Cardiac septum (tissue), 1 donor: ENCODE measurements at regions of chr7 and their contacts with region 1.

Region 1: DNA sequence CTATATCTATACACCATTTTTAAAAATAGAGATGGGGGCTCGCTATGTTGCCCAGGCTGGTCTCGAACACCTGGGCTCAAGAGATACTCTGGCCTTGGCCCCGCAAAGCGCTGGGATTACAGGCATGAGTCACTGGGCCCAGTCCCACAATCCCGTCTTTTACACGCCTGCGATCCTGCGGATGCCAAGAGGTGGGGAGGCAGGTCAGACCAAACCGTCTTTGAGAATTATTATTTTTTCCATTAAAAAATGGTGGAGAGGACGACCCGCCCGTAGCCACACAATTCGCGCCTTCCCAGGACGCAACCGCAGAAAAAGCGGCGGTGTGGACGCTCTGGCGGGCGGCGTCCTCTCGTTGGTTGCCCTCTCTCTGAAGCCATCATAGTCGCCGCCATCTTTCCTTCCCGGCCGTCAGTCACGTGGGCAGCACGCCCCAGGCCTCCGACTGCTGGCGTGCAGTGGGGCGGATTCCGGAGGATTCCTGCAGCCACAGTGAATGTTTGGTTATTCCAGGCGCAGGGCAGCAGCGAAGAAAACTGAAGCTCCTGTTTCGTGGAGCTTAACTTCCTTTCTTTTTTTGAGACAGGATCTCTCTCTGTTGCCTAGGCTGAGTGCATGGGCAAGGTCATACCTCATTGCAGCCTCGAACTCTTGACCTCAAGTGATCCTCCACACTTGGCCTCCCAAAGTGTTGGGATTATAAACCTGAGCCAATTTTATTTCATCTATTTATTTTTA is 9.9 kb upstream of the EPHB4 start:
- DNase-seq: peak; percentile 96

Region 2: GRCh38 chr7:100719523-100720319 is 117.5 kb before region 1 on chr7:
- intact Hi-C with region 1: no loop called
- DNase-seq: no peak

Region 3: GRCh38 chr7:100803398-100804233 is 33.7 kb before region 1 on chr7:
- intact Hi-C with region 1: loop called (anchors 5 kb)
- DNase-seq: peak; percentile 79

Region 4: DNA sequence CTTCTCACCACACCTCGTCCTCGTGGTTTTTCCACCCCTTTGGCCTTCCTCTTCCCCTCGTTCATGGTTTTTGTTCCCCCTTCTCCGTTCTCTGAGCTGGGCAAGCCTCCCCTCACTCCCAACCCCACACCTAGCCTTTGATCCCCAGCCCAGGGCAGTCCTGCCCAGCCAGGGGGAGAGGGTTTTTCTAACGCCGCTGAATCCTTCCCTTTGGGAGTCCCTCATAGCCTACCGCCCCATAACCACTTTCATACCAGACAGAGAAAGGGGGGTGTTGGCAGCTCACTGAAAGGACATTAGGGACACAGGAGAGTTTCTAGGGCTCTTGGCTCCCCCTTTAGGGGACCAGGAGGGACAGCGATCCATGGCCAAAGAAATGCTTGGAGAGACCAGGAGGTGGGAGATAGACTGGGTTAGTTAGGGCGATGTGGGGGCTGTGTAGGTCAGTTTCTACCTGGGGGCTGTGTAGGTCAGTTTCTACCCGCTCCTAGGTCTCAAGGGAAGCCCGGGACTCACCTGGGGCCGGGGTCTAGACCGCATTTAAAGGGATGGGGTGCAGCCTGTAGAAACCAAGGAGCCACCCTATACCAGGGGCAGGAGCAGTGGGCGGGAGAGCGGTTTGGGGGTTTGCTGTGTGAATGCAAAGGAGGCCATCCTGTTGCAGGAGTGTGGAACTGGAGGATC is 11.3 kb before region 1 on chr7:
- intact Hi-C with region 1: loop called (anchors 2 kb)
- DNase-seq: no peak

Region 5: GRCh38 chr7:100867040-100867775 is 29.9 kb after region 1 on chr7 and contains the start of gene TRIP6:
- intact Hi-C with region 1: loop called (anchors 2 kb)
- DNase-seq: peak; percentile 91
- total RNA-seq, gene TRIP6: 24.4 TPM

Region 6: GRCh38 chr7:101126651-101127280 is 289.5 kb after region 1 on chr7 and contains the start of gene SERPINE1:
- intact Hi-C with region 1: no loop called
- DNase-seq: peak; percentile 90
- total RNA-seq, gene SERPINE1: 27.2 TPM